B cell (primary cell): ENCODE measurements at regions of chr10 and their contacts with region 1.

Region 1: GRCh38 chr10:110225756-110226542 is 18.5 kb downstream of the MXI1 start:
- DNase-seq: peak; percentile 95
- ATAC-seq: peak; percentile 53
- H3K4me3 ChIP-seq: peak overlapping the region; percentile 42 to 90 (median 77)
- H3K4me3 Mint-ChIP-seq: peak overlapping the region; percentile 97
- H3K27ac ChIP-seq: peak overlapping the region; percentile 79 to 84
- H3K27ac Mint-ChIP-seq: peak overlapping the region; percentile 97
- H3K4me1 ChIP-seq: peaks cover 22 to 25% of the 10 kb centered on the region in 2 donors
- H3K4me1 Mint-ChIP-seq: peaks cover 38% of the 10 kb centered on the region
- H3K27me3 ChIP-seq: peaks cover 0 to 5% (median 2%) of the 10 kb centered on the region in 4 experiments
- H3K27me3 Mint-ChIP-seq: peaks cover 3% of the 10 kb centered on the region
- CTCF ChIP-seq: peak; percentile 65

Region 2: GRCh38 chr10:109922976-109923921 is 302.7 kb before region 1 on chr10 and contains the start of gene XPNPEP1:
- CTCF ChIA-PET with region 1: no interaction called
- POLR2A ChIA-PET with region 1: no interaction called
- intact Hi-C with region 1: loop called (anchors 1 kb)
- DNase-seq: peak; percentile 92
- ATAC-seq: peak; percentile 96
- H3K4me3 ChIP-seq: peak within 1 kb of the TSS; percentile 55 to 91 (median 75)
- H3K4me3 Mint-ChIP-seq: peak within 1 kb of the TSS; percentile 90
- H3K27ac ChIP-seq: peak within 1 kb of the TSS; percentile 60 to 81
- H3K27ac Mint-ChIP-seq: peak within 1 kb of the TSS; percentile 88
- H3K4me1 ChIP-seq: peaks cover 18 to 23% of the 10 kb centered on the region in 2 donors
- H3K4me1 Mint-ChIP-seq: peaks cover 39% of the 10 kb centered on the region
- H3K27me3 ChIP-seq: no peaks in the 10 kb centered on the region
- H3K27me3 Mint-ChIP-seq: no peaks in the 10 kb centered on the region
- CTCF ChIP-seq: no peak
- total RNA-seq, gene XPNPEP1: 56.1 and 60.6 TPM in 2 replicates

Region 3: GRCh38 chr10:110163192-110163773 is 62.7 kb before region 1 on chr10:
- CTCF ChIA-PET with region 1: no interaction called
- POLR2A ChIA-PET with region 1: no interaction called
- intact Hi-C with region 1: loop called (anchors 5 kb)
- DNase-seq: no peak
- ATAC-seq: no peak
- H3K4me3 ChIP-seq: no peak overlapping the region
- H3K4me3 Mint-ChIP-seq: no peak overlapping the region
- H3K27ac ChIP-seq: no peak overlapping the region
- H3K27ac Mint-ChIP-seq: no peak overlapping the region
- H3K4me1 ChIP-seq: peaks cover 5 to 14% of the 10 kb centered on the region in 2 donors
- H3K4me1 Mint-ChIP-seq: peaks cover 11% of the 10 kb centered on the region
- H3K27me3 ChIP-seq: peaks cover 1 to 59% (median 25%) of the 10 kb centered on the region in 4 experiments
- H3K27me3 Mint-ChIP-seq: peaks cover 41% of the 10 kb centered on the region
- CTCF ChIP-seq: no peak

Region 4: DNA sequence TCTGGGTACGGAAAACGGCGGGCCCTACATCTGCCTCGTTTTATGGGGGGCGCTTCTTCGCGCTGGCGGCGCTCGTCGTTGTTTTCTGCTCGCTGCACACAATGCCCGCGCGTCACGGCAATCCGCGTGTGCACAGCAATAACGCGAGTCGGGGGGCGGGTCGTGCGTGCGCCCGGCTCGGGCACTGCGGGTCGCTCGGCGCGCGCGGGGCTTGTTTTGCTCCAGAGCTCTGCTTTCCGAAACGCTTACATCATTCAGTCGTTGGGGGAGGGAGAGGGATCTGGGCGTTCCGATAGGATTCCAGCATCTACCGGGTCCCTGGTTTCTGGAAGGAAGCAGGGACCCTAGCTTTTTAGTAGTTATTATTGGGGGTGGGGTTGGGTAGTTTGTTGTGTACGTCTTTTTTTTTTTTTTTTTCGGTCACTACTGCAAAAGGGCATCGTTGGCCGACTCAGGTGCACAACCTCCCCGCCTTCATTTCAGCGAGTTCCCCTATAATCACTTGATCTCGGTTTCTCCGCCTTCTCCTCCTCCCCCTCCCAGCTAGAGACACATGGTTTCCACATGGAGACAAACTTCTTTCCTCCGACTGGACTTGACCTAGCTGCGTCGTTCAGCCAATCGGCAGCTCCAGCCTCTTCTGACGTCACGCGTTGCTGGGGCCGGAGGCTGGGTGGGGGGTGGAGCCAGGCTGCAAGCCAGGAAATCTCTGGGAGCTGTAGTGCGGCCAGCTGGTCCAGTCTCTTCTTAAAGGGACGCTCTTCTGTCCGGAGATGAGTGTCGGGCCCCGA is 15.1 kb before region 1 on chr10:
- CTCF ChIA-PET with region 1: interaction called, 116 read pairs
- POLR2A ChIA-PET with region 1: interaction called, 57 read pairs
- intact Hi-C with region 1: loop called (anchors 1 kb)
- DNase-seq: peak; percentile 94
- ATAC-seq: peak; percentile 68
- H3K4me3 ChIP-seq: peak overlapping the region; percentile 67 to 90 (median 82)
- H3K4me3 Mint-ChIP-seq: peak overlapping the region; percentile 88
- H3K27ac ChIP-seq: peak overlapping the region; percentile 82 to 85
- H3K27ac Mint-ChIP-seq: peak overlapping the region; percentile 97
- H3K4me1 ChIP-seq: peaks cover 44 to 67% of the 10 kb centered on the region in 2 donors
- H3K4me1 Mint-ChIP-seq: peaks cover 58% of the 10 kb centered on the region
- H3K27me3 ChIP-seq: peaks cover 0 to 18% (median 7%) of the 10 kb centered on the region in 4 experiments
- H3K27me3 Mint-ChIP-seq: peaks cover 4% of the 10 kb centered on the region
- CTCF ChIP-seq: no peak

Region 5: DNA sequence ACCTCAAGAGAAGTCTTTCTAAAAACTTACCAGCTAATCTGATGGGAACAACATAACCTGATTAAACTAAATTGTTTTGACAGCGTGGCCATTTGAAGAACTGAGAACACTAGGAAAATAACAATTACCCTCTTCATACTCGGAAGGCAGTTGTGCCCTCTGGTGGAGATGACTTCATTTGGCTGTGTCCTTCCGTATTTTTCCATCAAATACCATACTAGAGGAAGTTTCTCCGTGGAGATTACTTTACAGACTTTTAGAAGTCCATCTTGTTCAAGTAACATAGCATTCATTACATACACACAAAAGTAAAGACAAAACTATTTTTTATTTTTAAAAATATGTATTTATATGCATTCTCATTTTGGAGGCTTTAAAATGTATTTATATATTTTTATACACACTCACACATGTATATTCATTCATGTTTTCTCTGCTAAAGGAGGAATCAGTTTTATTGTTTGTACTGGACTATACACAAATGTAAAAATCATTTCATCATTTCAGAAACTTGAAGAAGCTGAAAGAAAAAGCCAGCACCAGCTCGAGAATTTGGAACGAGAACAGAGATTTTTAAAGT is 53.5 kb after region 1 on chr10:
- CTCF ChIA-PET with region 1: interaction called, 11 read pairs
- POLR2A ChIA-PET with region 1: no interaction called
- intact Hi-C with region 1: loop called (anchors 1 kb)
- DNase-seq: peak; percentile 79
- ATAC-seq: peak; percentile 68
- H3K4me3 ChIP-seq: peak overlapping the region in 1 of 5 experiments; percentile 38
- H3K4me3 Mint-ChIP-seq: peak overlapping the region; percentile 26
- H3K27ac ChIP-seq: no peak overlapping the region
- H3K27ac Mint-ChIP-seq: no peak overlapping the region
- H3K4me1 ChIP-seq: peaks cover 11 to 17% of the 10 kb centered on the region in 2 donors
- H3K4me1 Mint-ChIP-seq: peaks cover 21% of the 10 kb centered on the region
- H3K27me3 ChIP-seq: no peaks in the 10 kb centered on the region
- H3K27me3 Mint-ChIP-seq: no peaks in the 10 kb centered on the region
- CTCF ChIP-seq: peak; percentile 84

Region 6: GRCh38 chr10:110497438-110498086 is 271.6 kb after region 1 on chr10 and contains the start of gene DUSP5:
- CTCF ChIA-PET with region 1: no interaction called
- POLR2A ChIA-PET with region 1: no interaction called
- intact Hi-C with region 1: loop called (anchors 5 kb)
- DNase-seq: peak; percentile 99
- ATAC-seq: peak; percentile 91
- H3K4me3 ChIP-seq: peak within 1 kb of the TSS in 4 of 5 experiments; percentile 57 to 71 (median 62)
- H3K4me3 Mint-ChIP-seq: peak within 1 kb of the TSS; percentile 93
- H3K27ac ChIP-seq: peak within 1 kb of the TSS; percentile 65 to 80
- H3K27ac Mint-ChIP-seq: peak within 1 kb of the TSS; percentile 93
- H3K4me1 ChIP-seq: peaks cover 35 to 51% of the 10 kb centered on the region in 2 donors
- H3K4me1 Mint-ChIP-seq: peaks cover 56% of the 10 kb centered on the region
- H3K27me3 ChIP-seq: peaks cover 0 to 14% (median 2%) of the 10 kb centered on the region in 4 experiments
- H3K27me3 Mint-ChIP-seq: peaks cover 6% of the 10 kb centered on the region
- CTCF ChIP-seq: no peak
- total RNA-seq, gene DUSP5: 10.0 and 10.8 TPM in 2 replicates

Region 7: GRCh38 chr10:110864662-110865140 is 638.8 kb after region 1 on chr10:
- CTCF ChIA-PET with region 1: no interaction called
- POLR2A ChIA-PET with region 1: no interaction called
- intact Hi-C with region 1: loop called (anchors 10 kb)
- DNase-seq: peak; percentile 89
- ATAC-seq: peak; percentile 55
- H3K4me3 ChIP-seq: peak overlapping the region in 4 of 5 experiments; percentile 21 to 60 (median 38)
- H3K4me3 Mint-ChIP-seq: peak overlapping the region; percentile 85
- H3K27ac ChIP-seq: peak overlapping the region; percentile 94 to 96
- H3K27ac Mint-ChIP-seq: peak overlapping the region; percentile 97
- H3K4me1 ChIP-seq: peaks cover 97 to 100% of the 10 kb centered on the region in 2 donors
- H3K4me1 Mint-ChIP-seq: peaks cover 97% of the 10 kb centered on the region
- H3K27me3 ChIP-seq: no peaks in the 10 kb centered on the region
- H3K27me3 Mint-ChIP-seq: no peaks in the 10 kb centered on the region
- CTCF ChIP-seq: no peak